ENCODE measurements at regions of chr6 and their contacts with region 1.

Region 1: GRCh38 chr6:156686995-156687788 is 90.0 kb upstream of the ARID1B start:
- DNase-seq: peak; percentile 93

Region 2: DNA sequence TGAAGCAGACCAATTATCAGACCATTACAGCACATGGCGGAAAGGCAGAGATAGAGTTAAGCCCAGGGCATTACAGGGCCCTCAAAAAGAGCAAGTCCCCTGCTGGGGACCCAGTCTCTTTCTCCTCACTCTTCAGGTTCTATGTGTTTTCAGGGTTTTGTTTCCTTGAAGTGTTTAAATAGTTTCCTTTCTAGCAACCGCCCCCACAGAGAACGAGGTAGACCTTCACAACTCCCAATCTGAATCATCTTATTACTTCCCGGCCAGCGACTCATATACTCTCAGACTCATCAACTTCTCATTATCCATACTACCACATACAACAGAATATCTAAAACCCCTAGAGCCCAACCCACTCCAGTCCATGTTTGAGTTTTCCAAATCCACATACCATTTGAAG is 436.6 kb before region 1 on chr6:
- intact Hi-C with region 1: no loop called
- DNase-seq: no peak

Region 3: GRCh38 chr6:156269751-156270369 is 417.3 kb before region 1 on chr6:
- intact Hi-C with region 1: no loop called
- DNase-seq: no peak

Region 4: GRCh38 chr6:156457601-156458000 is 229.6 kb before region 1 on chr6:
- intact Hi-C with region 1: no loop called
- DNase-seq: no peak

Region 5: GRCh38 chr6:156564127-156564806 is 122.9 kb before region 1 on chr6:
- intact Hi-C with region 1: loop called (anchors 5 kb)
- DNase-seq: peak; percentile 90

Region 6: GRCh38 chr6:156719720-156720563 is 32.8 kb after region 1 on chr6:
- intact Hi-C with region 1: loop called (anchors 1 kb)
- DNase-seq: peak; percentile 96

Region 7: GRCh38 chr6:156848533-156848932 is 161.3 kb after region 1 on chr6:
- intact Hi-C with region 1: loop called (anchors 10 kb)
- DNase-seq: peak; percentile 90

Region 8: GRCh38 chr6:156901309-156902019 is 214.3 kb after region 1 on chr6:
- intact Hi-C with region 1: no loop called
- DNase-seq: no peak

Region 9: DNA sequence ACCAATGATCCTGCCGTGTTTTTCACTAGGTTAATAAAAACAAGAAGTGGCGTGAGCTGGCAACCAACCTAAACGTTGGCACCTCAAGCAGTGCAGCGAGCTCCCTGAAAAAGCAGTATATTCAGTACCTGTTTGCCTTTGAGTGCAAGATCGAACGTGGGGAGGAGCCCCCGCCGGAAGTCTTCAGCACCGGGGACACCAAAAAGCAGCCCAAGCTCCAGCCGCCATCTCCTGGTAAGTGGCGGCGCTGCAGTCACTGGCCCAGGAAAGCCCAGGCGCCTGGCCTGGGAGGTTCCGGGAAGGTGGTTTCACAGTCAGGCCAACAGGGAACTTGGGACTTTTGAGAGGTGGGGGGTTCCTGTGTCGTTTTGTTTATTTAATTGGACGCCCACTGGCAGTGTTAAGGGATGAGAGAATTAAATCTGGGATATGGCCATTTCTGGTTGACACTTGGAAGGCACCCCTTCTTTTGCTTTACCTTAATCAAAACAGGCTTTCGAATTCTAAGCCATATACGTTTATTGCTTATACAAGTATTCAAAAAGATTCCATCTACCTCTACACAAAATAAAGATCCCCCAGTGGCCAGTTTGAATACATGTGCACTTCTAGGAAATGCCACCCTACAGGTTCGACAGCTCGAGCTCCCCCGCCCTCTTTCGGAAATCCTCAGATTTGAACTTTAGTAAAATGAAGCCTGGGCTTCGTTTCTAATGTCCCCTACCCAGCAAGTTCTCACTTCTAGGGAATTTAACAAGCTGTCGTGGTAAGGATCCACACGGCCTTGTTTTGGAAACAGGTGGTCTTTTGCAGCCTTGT is 497.2 kb after region 1 on chr6:
- intact Hi-C with region 1: loop called (anchors 5 kb)
- DNase-seq: no peak

Measured in cardiac septum (tissue), 1 donor.